Caco-2 (cell line): ENCODE measurements at regions of chr6 and their contacts with region 1.

Region 1: DNA sequence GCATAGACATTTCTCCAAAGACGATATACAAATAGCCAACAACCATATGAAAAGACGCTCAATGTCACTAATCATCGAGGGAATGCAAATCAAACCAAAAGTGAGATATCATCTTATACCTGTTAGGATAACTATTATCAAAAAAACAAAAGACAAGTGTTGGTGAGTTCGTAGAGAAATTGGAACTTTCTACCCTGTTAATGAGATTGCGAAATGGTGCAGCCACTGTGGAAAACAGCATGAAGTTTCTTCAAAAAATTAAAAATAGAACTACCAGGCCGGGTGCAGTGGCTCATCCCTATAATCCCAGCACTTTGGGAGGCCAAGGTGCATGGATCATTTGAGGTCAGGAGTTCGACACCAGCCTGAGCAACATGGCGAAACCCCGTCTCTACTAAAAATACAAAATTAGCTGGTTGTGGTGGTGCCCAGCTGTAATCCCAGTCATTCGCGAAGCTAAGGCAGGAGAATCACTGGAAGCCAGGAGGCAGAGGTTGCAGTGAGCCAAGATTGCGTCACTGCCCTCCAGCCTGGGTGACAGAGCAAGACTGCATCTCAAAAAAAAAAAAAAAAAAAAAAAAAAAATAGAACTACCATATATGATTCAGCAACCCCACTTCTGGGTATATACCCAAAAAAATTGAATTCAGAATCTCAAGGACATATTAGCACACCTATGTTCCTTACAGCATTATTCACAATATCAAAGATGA is 170.0 kb upstream of the ZNF184 start:
- DNase-seq: no peak
- H3K4me3 ChIP-seq: no peak overlapping the region
- H3K4me3 Mint-ChIP-seq: no peak overlapping the region
- H3K27ac Mint-ChIP-seq: no peak overlapping the region
- H3K4me1 ChIP-seq: no peaks in the 10 kb centered on the region
- H3K4me1 Mint-ChIP-seq: no peaks in the 10 kb centered on the region
- H3K27me3 ChIP-seq: no peaks in the 10 kb centered on the region
- H3K27me3 Mint-ChIP-seq: no peaks in the 10 kb centered on the region
- CTCF ChIP-seq: no peak

Region 2: GRCh38 chr6:27495386-27496135 is 147.3 kb before region 1 on chr6:
- CTCF ChIA-PET with region 1: no interaction called
- POLR2A ChIA-PET with region 1: no interaction called
- intact Hi-C with region 1: no loop called
- DNase-seq: peak in 1 of 2 experiments; percentile 19
- H3K4me3 ChIP-seq: no peak overlapping the region
- H3K4me3 Mint-ChIP-seq: no peak overlapping the region
- H3K27ac Mint-ChIP-seq: no peak overlapping the region
- H3K4me1 ChIP-seq: no peaks in the 10 kb centered on the region
- H3K4me1 Mint-ChIP-seq: peaks cover 6% of the 10 kb centered on the region
- H3K27me3 ChIP-seq: no peaks in the 10 kb centered on the region
- H3K27me3 Mint-ChIP-seq: peaks cover 3% of the 10 kb centered on the region
- CTCF ChIP-seq: no peak

Region 3: DNA sequence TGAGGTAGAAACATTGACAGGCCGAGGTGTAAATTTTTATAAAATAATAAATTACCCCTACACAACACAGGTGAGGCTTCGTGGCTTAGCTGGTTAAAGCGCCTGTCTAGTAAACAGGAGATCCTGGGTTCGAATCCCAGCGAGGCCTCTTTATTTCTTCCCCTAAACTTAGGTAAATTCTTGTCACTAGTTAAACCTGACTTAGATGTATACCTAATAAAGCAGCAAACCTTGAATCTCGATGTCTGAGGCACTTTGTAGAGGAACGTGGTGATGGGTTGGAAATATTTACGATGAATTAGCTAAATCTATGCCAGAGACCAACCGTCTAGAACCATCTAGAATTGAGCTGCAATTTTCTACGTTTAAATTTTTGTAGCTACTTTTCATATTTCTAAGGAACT is 83.7 kb after region 1 on chr6:
- CTCF ChIA-PET with region 1: no interaction called
- POLR2A ChIA-PET with region 1: interaction called, 10 read pairs
- intact Hi-C with region 1: no loop called
- DNase-seq: no peak
- H3K4me3 ChIP-seq: no peak overlapping the region
- H3K4me3 Mint-ChIP-seq: no peak overlapping the region
- H3K27ac Mint-ChIP-seq: no peak overlapping the region
- H3K4me1 ChIP-seq: 0 out of 2 replicates have a peak, but pooled peaks cover 5% of the 10 kb centered on the region
- H3K4me1 Mint-ChIP-seq: peaks cover 10% of the 10 kb centered on the region
- H3K27me3 ChIP-seq: no peaks in the 10 kb centered on the region
- H3K27me3 Mint-ChIP-seq: no peaks in the 10 kb centered on the region
- CTCF ChIP-seq: no peak

Region 4: DNA sequence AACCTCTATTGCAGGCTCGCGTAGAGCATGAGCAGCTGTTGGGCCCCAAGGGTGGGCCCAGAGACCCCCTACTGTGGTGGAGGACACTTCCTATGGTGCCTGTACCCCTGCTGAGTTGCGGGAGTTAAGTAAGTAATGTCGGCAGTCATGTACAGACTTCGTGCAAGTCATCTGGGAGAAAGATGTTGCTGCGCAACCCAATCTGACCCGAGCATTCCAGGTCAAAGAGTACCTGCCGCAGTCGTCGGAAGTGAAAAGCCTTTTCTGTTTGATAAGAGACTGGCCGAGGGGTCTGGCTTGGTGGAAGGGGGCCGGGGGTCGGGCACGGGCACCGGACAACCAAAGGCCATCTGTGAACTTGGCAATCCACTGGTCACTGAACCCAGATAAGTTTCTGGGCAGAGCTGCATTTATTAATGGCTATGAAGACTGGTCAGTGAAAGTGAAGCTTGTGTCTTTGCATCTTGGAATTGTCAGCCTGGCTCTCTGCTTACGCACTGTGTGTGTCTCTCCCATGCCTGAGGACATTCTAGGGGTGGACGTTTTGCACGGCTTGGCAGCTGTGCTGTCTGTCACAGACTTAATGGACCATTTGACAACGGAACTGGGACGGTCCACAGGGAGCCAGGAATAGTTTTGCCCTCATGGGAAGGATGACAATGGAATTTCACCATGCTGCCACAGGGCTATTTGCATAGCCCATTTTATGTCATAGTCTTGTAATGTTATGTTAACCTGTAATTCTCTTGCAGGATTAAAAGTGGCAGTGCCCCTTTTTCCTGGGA is 358.6 kb after region 1 on chr6:
- CTCF ChIA-PET with region 1: no interaction called
- POLR2A ChIA-PET with region 1: no interaction called
- intact Hi-C with region 1: no loop called
- DNase-seq: no peak
- H3K4me3 ChIP-seq: no peak overlapping the region
- H3K4me3 Mint-ChIP-seq: no peak overlapping the region
- H3K27ac Mint-ChIP-seq: no peak overlapping the region
- H3K4me1 ChIP-seq: no peaks in the 10 kb centered on the region
- H3K4me1 Mint-ChIP-seq: no peaks in the 10 kb centered on the region
- H3K27me3 ChIP-seq: no peaks in the 10 kb centered on the region
- H3K27me3 Mint-ChIP-seq: peaks cover 4% of the 10 kb centered on the region
- CTCF ChIP-seq: no peak